ENCODE measurements at regions of chr9 and their contacts with region 1.

Region 1: DNA sequence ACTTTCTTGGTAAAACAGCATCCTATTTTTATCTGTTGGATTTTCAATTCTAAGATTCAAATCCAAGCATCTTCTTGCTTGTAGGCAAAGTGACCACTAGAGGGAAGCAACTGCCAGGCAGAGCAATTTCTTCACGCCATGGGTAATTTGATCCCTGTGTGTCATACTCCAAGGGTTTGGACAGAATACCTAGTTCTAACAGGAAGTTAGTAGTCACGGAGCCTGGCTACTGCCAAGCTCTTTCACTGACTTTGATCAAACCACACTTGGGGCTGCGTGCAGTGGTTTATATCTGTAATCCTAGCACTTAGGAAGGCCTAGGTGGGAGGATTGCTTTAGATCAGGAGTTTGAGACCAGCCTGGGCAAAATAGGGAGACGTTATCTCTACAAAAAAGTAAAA is 473.6 kb upstream of the TNC start:
- DNase-seq: no peak
- ATAC-seq: no peak
- H3K4me3 Mint-ChIP-seq: no peak overlapping the region
- H3K27ac Mint-ChIP-seq: no peak overlapping the region
- H3K4me1 Mint-ChIP-seq: no peaks in the 10 kb centered on the region
- H3K27me3 Mint-ChIP-seq: peaks cover 14% of the 10 kb centered on the region
- CTCF ChIP-seq: no peak

Region 2: GRCh38 chr9:114681594-114682332 is 909.8 kb before region 1 on chr9 and contains the start of gene TEX48:
- CTCF ChIA-PET with region 1: no interaction called
- POLR2A ChIA-PET with region 1: no interaction called
- intact Hi-C with region 1: loop called (anchors 5 kb)
- DNase-seq: no peak
- ATAC-seq: peak; percentile 94
- H3K4me3 Mint-ChIP-seq: no peak within 1 kb of the TSS
- H3K27ac Mint-ChIP-seq: peak within 1 kb of the TSS; percentile 36
- H3K4me1 Mint-ChIP-seq: peaks cover 5% of the 10 kb centered on the region
- H3K27me3 Mint-ChIP-seq: peaks cover 24% of the 10 kb centered on the region
- CTCF ChIP-seq: no peak
- total RNA-seq, gene TEX48: not detected in 2 replicates

Region 3: DNA sequence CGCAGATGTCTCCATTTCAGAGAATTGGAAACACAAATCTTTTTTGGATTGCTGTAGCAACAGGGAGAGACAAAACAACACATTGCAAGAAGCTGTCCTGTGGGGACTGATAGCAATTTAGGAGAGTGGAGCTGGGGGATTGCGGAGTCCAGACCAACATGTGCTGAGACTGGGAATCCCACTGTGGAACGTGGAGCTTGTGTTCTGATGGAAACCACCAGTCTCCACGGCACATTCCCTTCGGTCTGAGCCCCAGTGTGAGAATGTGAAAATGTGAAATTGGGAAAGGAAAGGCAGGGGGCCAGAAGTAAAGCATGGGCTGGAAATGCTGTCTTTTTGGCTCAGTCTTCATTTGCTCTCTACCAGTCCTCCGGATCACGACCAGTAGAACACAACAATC is 124.8 kb before region 1 on chr9:
- CTCF ChIA-PET with region 1: no interaction called
- POLR2A ChIA-PET with region 1: no interaction called
- intact Hi-C with region 1: no loop called
- DNase-seq: no peak
- ATAC-seq: no peak
- H3K4me3 Mint-ChIP-seq: no peak overlapping the region
- H3K27ac Mint-ChIP-seq: no peak overlapping the region
- H3K4me1 Mint-ChIP-seq: no peaks in the 10 kb centered on the region
- H3K27me3 Mint-ChIP-seq: no peaks in the 10 kb centered on the region
- CTCF ChIP-seq: no peak

Region 4: DNA sequence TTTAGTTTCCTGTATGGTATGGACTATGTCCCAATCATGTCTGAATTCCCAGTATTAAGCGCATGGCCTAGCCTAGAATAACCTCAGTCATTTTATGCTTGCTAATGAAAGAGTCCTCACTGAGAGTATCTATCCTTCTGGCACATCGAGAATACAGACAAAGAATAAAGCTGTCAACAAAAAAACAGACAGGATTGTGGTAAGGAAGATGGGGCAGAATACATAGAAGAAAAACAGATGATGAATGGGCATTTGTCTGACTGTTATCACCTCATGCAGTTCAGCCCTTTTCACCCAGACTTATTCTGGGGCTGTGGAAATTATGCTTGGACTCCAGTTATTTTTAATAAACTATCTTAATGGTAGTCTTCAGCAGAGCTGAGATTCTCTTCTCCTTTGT is 109.8 kb before region 1 on chr9:
- CTCF ChIA-PET with region 1: no interaction called
- POLR2A ChIA-PET with region 1: no interaction called
- intact Hi-C with region 1: no loop called
- DNase-seq: no peak
- ATAC-seq: no peak
- H3K4me3 Mint-ChIP-seq: no peak overlapping the region
- H3K27ac Mint-ChIP-seq: no peak overlapping the region
- H3K4me1 Mint-ChIP-seq: no peaks in the 10 kb centered on the region
- H3K27me3 Mint-ChIP-seq: peaks cover 2% of the 10 kb centered on the region
- CTCF ChIP-seq: no peak

Region 5: DNA sequence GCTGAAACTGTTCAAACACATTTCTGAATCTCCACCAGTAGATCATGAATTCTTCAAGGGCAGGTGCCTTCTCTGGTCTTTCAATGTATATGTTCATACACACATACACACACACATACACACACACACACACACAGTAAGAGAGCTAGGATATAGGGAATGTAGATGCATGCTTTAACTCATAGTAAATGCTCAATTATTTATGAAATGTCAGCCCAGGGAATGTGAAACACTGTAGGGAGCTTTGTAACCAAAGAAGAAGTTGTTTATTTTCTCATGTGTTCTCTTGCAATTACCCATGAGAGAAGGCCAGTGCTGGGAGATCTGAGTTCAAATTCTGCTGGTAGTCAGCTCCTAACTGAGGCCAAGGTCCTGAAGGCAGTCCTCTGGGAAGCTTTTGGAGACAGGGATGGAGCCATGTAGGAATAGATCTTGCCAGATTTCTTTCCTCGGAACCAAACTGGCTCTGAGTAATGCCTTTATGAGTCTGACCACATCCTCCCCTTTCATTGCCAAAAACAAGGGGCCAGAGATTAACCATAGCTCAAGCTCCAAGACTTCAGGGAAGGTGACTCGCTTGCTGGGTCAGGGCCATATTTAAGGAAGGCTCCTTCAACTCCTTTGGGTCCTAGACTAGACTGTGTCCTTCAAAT is 13.4 kb after region 1 on chr9:
- CTCF ChIA-PET with region 1: interaction called, 13 read pairs
- POLR2A ChIA-PET with region 1: no interaction called
- intact Hi-C with region 1: no loop called
- DNase-seq: no peak
- ATAC-seq: no peak
- H3K4me3 Mint-ChIP-seq: no peak overlapping the region
- H3K27ac Mint-ChIP-seq: no peak overlapping the region
- H3K4me1 Mint-ChIP-seq: no peaks in the 10 kb centered on the region
- H3K27me3 Mint-ChIP-seq: no peaks in the 10 kb centered on the region
- CTCF ChIP-seq: no peak

Region 6: DNA sequence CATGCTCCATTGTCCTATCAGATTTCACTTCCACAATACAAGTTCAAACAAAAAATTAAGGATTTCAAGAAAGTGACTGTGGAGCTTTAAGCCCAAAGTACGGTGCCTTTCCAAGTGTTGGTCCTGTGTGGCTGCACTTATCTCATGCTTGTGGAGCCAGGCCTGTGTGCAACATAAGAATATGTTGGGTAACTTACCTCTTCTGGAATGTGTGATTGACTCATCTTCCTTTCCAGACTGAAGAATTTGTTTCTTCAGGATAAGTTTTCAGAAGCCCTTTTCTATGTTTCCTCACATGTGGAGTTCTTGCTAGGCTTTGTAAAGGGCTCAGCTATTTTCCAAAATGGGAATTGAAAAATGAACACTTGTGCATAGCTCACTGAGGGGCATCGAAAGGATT is 76.9 kb after region 1 on chr9:
- CTCF ChIA-PET with region 1: no interaction called
- POLR2A ChIA-PET with region 1: no interaction called
- intact Hi-C with region 1: no loop called
- DNase-seq: no peak
- ATAC-seq: no peak
- H3K4me3 Mint-ChIP-seq: no peak overlapping the region
- H3K27ac Mint-ChIP-seq: no peak overlapping the region
- H3K4me1 Mint-ChIP-seq: no peaks in the 10 kb centered on the region
- H3K27me3 Mint-ChIP-seq: no peaks in the 10 kb centered on the region
- CTCF ChIP-seq: no peak

Region 7: GRCh38 chr9:116494815-116495634 is 903.4 kb after region 1 on chr9:
- CTCF ChIA-PET with region 1: no interaction called
- POLR2A ChIA-PET with region 1: no interaction called
- intact Hi-C with region 1: loop called (anchors 5 kb)
- DNase-seq: no peak
- ATAC-seq: no peak
- H3K4me3 Mint-ChIP-seq: no peak overlapping the region
- H3K27ac Mint-ChIP-seq: no peak overlapping the region
- H3K4me1 Mint-ChIP-seq: no peaks in the 10 kb centered on the region
- H3K27me3 Mint-ChIP-seq: peaks cover 2% of the 10 kb centered on the region
- CTCF ChIP-seq: no peak

Region 8: GRCh38 chr9:116572095-116572748 is 980.6 kb after region 1 on chr9:
- CTCF ChIA-PET with region 1: interaction called, 3 read pairs
- POLR2A ChIA-PET with region 1: no interaction called
- intact Hi-C with region 1: loop called (anchors 2 kb)
- DNase-seq: no peak
- ATAC-seq: no peak
- H3K4me3 Mint-ChIP-seq: no peak overlapping the region
- H3K27ac Mint-ChIP-seq: no peak overlapping the region
- H3K4me1 Mint-ChIP-seq: no peaks in the 10 kb centered on the region
- H3K27me3 Mint-ChIP-seq: no peaks in the 10 kb centered on the region
- CTCF ChIP-seq: no peak

Region 9: DNA sequence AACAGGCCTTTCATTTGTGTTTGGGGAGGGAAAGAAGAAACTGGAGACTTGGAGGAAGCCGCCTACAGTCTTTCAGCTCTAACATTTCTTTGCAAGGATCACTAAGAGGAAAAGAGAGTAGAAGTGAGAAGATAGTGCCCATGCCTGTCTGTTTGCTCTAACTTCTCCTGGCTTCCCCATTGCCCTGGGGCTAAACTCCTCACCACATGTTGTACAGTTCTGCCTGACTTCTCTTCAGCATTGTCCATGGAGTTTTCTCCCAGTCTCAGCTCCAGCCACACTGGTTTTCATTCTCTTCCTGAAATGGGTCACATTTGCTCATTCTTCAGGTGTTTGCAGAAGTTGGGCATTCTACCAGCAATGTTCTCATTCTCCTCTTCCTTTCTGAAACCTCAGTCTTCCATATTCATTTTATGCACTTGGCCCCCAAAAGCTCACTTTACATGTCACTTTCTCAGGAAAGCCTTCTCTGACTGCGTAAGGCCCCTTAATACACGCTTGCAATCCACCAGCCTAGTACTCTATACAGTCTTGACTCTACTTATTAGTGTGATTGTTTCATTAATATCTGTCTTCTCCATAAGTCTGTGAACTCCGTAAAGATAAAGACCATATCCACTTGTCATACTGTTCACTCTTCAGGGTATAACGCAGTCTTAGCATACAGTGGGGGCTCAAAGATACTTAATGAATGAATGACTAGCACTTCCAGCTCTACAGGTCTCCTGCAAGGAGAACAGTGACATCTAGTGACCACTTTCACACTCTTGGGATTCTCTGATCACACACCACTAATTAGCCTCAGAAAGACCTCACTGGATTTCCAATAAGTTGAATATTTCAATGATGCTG is 1055.3 kb after region 1 on chr9:
- CTCF ChIA-PET with region 1: interaction called, 4 read pairs
- POLR2A ChIA-PET with region 1: no interaction called
- intact Hi-C with region 1: loop called (anchors 5 kb)
- DNase-seq: no peak
- ATAC-seq: no peak
- H3K4me3 Mint-ChIP-seq: no peak overlapping the region
- H3K27ac Mint-ChIP-seq: no peak overlapping the region
- H3K4me1 Mint-ChIP-seq: no peaks in the 10 kb centered on the region
- H3K27me3 Mint-ChIP-seq: no peaks in the 10 kb centered on the region
- CTCF ChIP-seq: no peak

Region 10: DNA sequence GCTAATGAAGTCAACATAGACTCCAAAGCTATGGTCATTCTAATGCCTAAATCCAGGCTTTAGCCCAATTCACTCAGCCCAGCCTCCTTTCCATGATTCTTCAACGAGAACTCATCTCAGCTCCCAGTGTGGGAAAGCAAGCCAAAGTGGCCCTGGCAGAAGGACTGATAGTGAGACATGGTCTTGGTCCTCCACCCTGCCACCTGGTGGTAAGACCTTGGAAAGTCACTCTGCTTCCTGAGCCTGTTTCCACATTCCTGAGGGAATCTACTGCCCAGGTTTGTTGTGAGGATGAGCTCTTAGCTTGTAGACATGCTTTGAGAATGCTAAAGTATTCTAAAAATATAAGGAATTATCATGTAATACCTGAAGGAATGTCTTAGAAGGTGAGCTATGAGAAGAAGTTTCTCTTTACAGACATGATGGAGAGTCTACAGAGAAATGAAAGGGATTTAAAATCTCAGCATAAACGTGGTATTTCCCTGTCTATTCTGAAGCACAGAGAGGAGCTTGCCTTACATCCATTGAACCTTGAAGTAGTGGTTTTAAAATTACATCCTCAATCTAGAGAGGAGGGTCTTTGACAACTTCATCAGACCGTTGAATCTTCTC is 1269.0 kb after region 1 on chr9:
- CTCF ChIA-PET with region 1: interaction called, 6 read pairs
- POLR2A ChIA-PET with region 1: no interaction called
- intact Hi-C with region 1: loop called (anchors 5 kb)
- DNase-seq: no peak
- ATAC-seq: no peak
- H3K4me3 Mint-ChIP-seq: no peak overlapping the region
- H3K27ac Mint-ChIP-seq: no peak overlapping the region
- H3K4me1 Mint-ChIP-seq: no peaks in the 10 kb centered on the region
- H3K27me3 Mint-ChIP-seq: peaks cover 5% of the 10 kb centered on the region
- CTCF ChIP-seq: no peak

Measured in activated B cell treated with CpG ODN at 0.5 μM for 24 hours (primary cell).